Naive thymus-derived CD4-positive, alpha-beta T cell (primary cell): ENCODE measurements at regions of chr19 and their contacts with region 1.

Region 1: GRCh38 chr19:44002566-44003460 is at the start of gene ZNF230:
- DNase-seq: peak; percentile 50 to 85 (median 77)
- ATAC-seq: peak; percentile 99
- H3K4me3 ChIP-seq: peak within 1 kb of the TSS; percentile 88
- H3K4me3 Mint-ChIP-seq: peak within 1 kb of the TSS; percentile 96 to 100 (median 99)
- H3K27ac ChIP-seq: peak within 1 kb of the TSS; percentile 80
- H3K27ac Mint-ChIP-seq: peak within 1 kb of the TSS; percentile 87 to 98 (median 95)
- H3K4me1 ChIP-seq: peaks cover 0 to 8% of the 10 kb centered on the region in 2 donors
- H3K4me1 Mint-ChIP-seq: peaks cover 15 to 32% (median 20%) of the 10 kb centered on the region in 7 donors
- H3K27me3 ChIP-seq: no peaks in the 10 kb centered on the region
- H3K27me3 Mint-ChIP-seq: peaks cover 0 to 2% (median 0%) of the 10 kb centered on the region in 5 donors
- total RNA-seq, gene ZNF230: 2.7 to 18.1 (median 6.7) TPM

Region 2: DNA sequence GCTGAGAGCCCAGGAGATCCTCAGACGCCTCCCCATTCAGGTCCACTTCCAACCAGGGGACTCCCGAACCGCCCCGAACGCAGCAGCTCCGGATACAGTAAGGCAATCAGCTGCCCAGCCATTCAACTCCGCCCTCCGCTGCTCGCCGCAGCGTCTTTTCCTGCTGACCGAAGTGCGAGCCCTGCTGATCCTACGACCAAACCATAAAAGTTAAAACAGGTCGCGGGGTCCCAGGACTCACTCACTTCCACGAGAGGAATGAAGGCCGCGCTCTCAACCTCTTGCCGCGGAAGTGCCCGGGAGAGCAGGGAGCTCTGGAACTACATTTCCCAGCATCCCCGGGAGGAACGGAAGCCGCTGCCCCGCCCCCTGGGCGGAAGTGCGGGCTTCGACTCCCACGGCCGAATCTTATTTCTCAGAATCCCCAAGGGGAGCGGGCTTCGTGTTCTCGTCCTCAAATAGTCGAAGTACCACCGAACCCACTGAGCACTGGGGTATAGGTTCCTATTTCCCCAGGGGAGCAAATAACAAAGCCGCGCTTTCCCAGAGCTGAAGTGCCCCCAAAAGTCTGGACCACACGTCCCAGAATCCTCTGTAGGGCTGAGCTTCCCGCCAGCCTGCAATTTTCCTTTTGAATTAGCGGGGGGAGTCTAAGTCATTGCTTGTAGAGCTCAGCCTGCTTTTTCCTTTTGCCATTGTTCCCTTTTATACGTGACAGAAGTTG is 67.7 kb before region 1 on chr19 and contains the start of gene ZNF45:
- CTCF ChIA-PET with region 1: no interaction called
- POLR2A ChIA-PET with region 1: interaction called, 3 read pairs
- intact Hi-C with region 1: loop called (anchors 1 kb)
- DNase-seq: peak; percentile 65 to 89 (median 86)
- ATAC-seq: peak; percentile 98
- H3K4me3 ChIP-seq: peak within 1 kb of the TSS; percentile 84
- H3K4me3 Mint-ChIP-seq: peak within 1 kb of the TSS; percentile 93 to 98 (median 96)
- H3K27ac ChIP-seq: peak within 1 kb of the TSS; percentile 81
- H3K27ac Mint-ChIP-seq: peak within 1 kb of the TSS; percentile 81 to 96 (median 93)
- H3K4me1 ChIP-seq: peaks cover 16 to 17% of the 10 kb centered on the region in 2 donors
- H3K4me1 Mint-ChIP-seq: peaks cover 10 to 46% (median 32%) of the 10 kb centered on the region in 7 donors
- H3K27me3 ChIP-seq: no peaks in the 10 kb centered on the region
- H3K27me3 Mint-ChIP-seq: peaks cover 0 to 7% (median 0%) of the 10 kb centered on the region in 5 donors
- total RNA-seq, gene ZNF45: 8.4 to 28.5 (median 15.3) TPM

Region 3: GRCh38 chr19:44025217-44025936 is 22.6 kb after region 1 on chr19 and contains the start of gene ZNF222:
- CTCF ChIA-PET with region 1: no interaction called
- POLR2A ChIA-PET with region 1: interaction called, 7 read pairs
- intact Hi-C with region 1: loop called (anchors 1 kb)
- DNase-seq: peak; percentile 41 to 78 (median 66)
- ATAC-seq: peak; percentile 99
- H3K4me3 ChIP-seq: peak within 1 kb of the TSS; percentile 76
- H3K4me3 Mint-ChIP-seq: peak within 1 kb of the TSS; percentile 95 to 100 (median 98)
- H3K27ac ChIP-seq: peak within 1 kb of the TSS; percentile 71
- H3K27ac Mint-ChIP-seq: peak within 1 kb of the TSS; percentile 84 to 98 (median 94)
- H3K4me1 ChIP-seq: peaks cover 5 to 9% of the 10 kb centered on the region in 2 donors
- H3K4me1 Mint-ChIP-seq: peaks cover 12 to 40% (median 31%) of the 10 kb centered on the region in 7 donors
- H3K27me3 ChIP-seq: no peaks in the 10 kb centered on the region
- H3K27me3 Mint-ChIP-seq: peaks cover 0 to 9% (median 3%) of the 10 kb centered on the region in 5 donors
- total RNA-seq, gene ZNF222: 2.9 to 10.1 (median 4.5) TPM

Region 4: DNA sequence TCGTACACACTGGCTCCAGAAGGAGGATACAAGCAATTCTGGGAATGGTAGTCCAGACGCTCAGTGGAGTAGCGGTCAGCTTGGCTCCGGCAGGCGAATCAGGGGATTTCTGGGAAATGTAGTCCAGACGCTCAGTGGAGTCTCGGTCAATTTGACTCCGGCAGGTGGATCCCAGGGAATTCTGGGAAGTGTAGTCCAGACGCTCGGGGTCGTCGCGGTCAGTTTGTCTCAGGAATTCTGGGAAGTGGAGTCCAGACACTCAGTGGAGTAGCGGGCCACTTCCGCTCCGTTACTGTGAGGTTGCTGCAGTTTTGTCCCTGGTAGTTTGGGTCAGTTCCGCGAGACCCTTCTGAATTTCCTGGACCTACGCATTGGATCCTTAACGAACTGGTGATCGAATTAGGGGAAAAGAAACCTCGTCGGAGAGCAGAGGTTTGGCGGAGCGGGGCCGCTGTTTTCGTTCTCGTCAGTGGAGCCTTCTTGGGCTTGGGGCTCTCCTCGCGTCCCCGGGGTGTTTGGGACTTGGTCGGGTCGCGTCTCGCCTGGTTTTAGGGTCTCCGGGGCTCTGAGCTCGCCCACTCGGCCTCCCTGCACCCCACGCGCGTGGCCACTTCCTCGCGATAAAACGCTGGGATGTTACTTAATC is 110.4 kb after region 1 on chr19 and contains the start of gene ZNF225:
- CTCF ChIA-PET with region 1: no interaction called
- POLR2A ChIA-PET with region 1: no interaction called
- intact Hi-C with region 1: loop called (anchors 1 kb)
- DNase-seq: peak; percentile 41 to 84 (median 76)
- ATAC-seq: peak; percentile 100
- H3K4me3 ChIP-seq: peak within 1 kb of the TSS; percentile 89
- H3K4me3 Mint-ChIP-seq: peak within 1 kb of the TSS; percentile 95 to 100 (median 99)
- H3K27ac ChIP-seq: peak within 1 kb of the TSS; percentile 68
- H3K27ac Mint-ChIP-seq: peak within 1 kb of the TSS; percentile 82 to 97 (median 88)
- H3K4me1 ChIP-seq: peaks cover 3 to 8% of the 10 kb centered on the region in 2 donors
- H3K4me1 Mint-ChIP-seq: peaks cover 16 to 38% (median 31%) of the 10 kb centered on the region in 7 donors
- H3K27me3 ChIP-seq: no peaks in the 10 kb centered on the region
- H3K27me3 Mint-ChIP-seq: no peaks in the 10 kb centered on the region
- total RNA-seq, gene ZNF225: 0.69 to 13.0 (median 5.1) TPM

Region 5: GRCh38 chr19:44207126-44207803 is 204.5 kb after region 1 on chr19:
- CTCF ChIA-PET with region 1: no interaction called
- POLR2A ChIA-PET with region 1: interaction called, 3 read pairs
- intact Hi-C with region 1: loop called (anchors 1 kb)
- DNase-seq: peak; percentile 25 to 78 (median 70)
- ATAC-seq: peak; percentile 97
- H3K4me3 ChIP-seq: peak overlapping the region; percentile 79
- H3K4me3 Mint-ChIP-seq: peak overlapping the region; percentile 81 to 95 (median 87)
- H3K27ac ChIP-seq: peak overlapping the region; percentile 75
- H3K27ac Mint-ChIP-seq: peak overlapping the region; percentile 79 to 93 (median 84)
- H3K4me1 ChIP-seq: peaks cover 0 to 11% of the 10 kb centered on the region in 2 donors
- H3K4me1 Mint-ChIP-seq: peaks cover 7 to 15% (median 11%) of the 10 kb centered on the region in 7 donors
- H3K27me3 ChIP-seq: no peaks in the 10 kb centered on the region
- H3K27me3 Mint-ChIP-seq: peaks cover 0 to 22% (median 16%) of the 10 kb centered on the region in 5 donors